Brain microvascular endothelial cell (primary cell): ENCODE measurements at regions of chr7 and their contacts with region 1.

Region 1: GRCh38 chr7:129816742-129817141 is 136.0 kb downstream of the UBE2H start:
- DNase-seq: no peak
- H3K4me3 ChIP-seq: no peak overlapping the region
- H3K27ac ChIP-seq: no peak overlapping the region
- H3K27me3 ChIP-seq: no peaks in the 10 kb centered on the region
- CTCF ChIP-seq: no peak

Region 2: GRCh38 chr7:129751916-129752315 is 64.8 kb before region 1 on chr7:
- in situ Hi-C with region 1: loop called (anchors 10 kb)
- DNase-seq: no peak
- H3K4me3 ChIP-seq: no peak overlapping the region
- H3K27ac ChIP-seq: no peak overlapping the region
- H3K27me3 ChIP-seq: no peaks in the 10 kb centered on the region
- CTCF ChIP-seq: no peak

Region 3: GRCh38 chr7:130529417-130529816 is 712.7 kb after region 1 on chr7:
- in situ Hi-C with region 1: no loop called
- DNase-seq: no peak
- H3K4me3 ChIP-seq: no peak overlapping the region
- H3K27ac ChIP-seq: no peak overlapping the region
- H3K27me3 ChIP-seq: no peaks in the 10 kb centered on the region
- CTCF ChIP-seq: no peak